ENCODE measurements at regions of chr3 and their contacts with region 1.

Region 1: DNA sequence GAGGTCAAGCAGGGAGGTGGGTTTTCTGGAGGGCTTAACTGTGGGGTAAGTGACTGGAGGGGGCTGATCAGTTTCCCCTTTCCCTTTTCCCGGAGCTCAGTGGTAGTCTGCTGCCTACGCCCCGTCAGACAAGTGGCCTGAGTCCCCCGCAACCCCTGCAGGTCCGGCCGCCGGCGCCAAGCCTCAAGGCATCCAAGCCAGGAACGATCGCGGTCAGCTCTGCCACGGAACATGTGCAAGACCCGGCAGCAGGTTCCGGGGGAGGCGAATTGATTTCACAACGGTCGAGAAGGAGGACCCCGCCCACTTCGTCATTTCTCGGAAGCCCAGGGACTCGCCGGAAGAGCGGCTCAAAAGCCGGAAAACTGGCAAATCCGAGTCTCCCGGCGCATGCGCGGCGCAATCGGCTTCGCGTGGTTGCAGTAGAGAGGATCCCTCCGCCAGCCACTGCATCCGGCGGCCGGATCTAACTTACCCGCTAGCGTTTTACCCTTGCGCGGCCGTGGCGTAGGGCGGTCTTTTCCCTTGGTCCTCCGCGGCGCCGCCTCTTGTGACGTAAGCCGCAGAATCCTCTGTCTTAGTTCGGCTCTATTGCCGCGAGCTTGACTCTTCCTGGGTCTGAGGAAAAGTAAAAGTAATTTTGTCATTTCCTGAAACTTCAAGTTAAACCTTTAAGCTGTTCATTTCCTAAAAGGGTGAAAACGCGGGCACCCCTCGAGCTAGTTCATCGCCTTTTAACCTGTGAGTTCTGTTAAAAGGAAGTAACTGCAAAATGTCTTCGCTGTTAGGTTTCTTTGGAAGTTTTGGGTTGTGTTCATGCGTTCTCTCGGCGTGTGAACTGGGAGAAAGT is 14.9 kb upstream of the CCNL1 start:
- DNase-seq: peak; percentile 99
- H3K4me3 ChIP-seq: peak overlapping the region; percentile 30 to 67 (median 54)
- H3K27ac ChIP-seq: peak overlapping the region; percentile 95 to 98 (median 96)
- H3K4me1 ChIP-seq: peaks cover 10 to 26% (median 18%) of the 10 kb centered on the region in 4 donors
- H3K27me3 ChIP-seq: no peaks in the 10 kb centered on the region
- CTCF ChIP-seq: no peak
- EP300 ChIP-seq: peak; percentile 93
- POLR2A ChIP-seq: peak; percentile 99

Region 2: GRCh38 chr3:157159762-157160657 is 14.9 kb before region 1 on chr3 and contains the start of gene CCNL1:
- in situ Hi-C with region 1: no loop called
- intact Hi-C with region 1: loop called (anchors 1 kb)
- DNase-seq: peak; percentile 98
- H3K4me3 ChIP-seq: peak within 1 kb of the TSS; percentile 79 to 99 (median 90)
- H3K27ac ChIP-seq: peak within 1 kb of the TSS; percentile 98 to 100 (median 100)
- H3K4me1 ChIP-seq: peaks cover 41 to 75% (median 51%) of the 10 kb centered on the region in 4 donors
- H3K27me3 ChIP-seq: no peaks in the 10 kb centered on the region
- CTCF ChIP-seq: peak in 2 of 5 experiments; percentile 24 to 27
- EP300 ChIP-seq: peak; percentile 90
- POLR2A ChIP-seq: peak; percentile 100
- total RNA-seq, gene CCNL1: 288 to 422 (median 308) TPM

Region 3: GRCh38 chr3:157220211-157220610 is 45.3 kb after region 1 on chr3:
- in situ Hi-C with region 1: no loop called
- intact Hi-C with region 1: no loop called
- DNase-seq: no peak
- H3K4me3 ChIP-seq: no peak overlapping the region
- H3K27ac ChIP-seq: no peak overlapping the region
- H3K4me1 ChIP-seq: no peaks in the 10 kb centered on the region
- H3K27me3 ChIP-seq: no peaks in the 10 kb centered on the region
- CTCF ChIP-seq: no peak
- EP300 ChIP-seq: no peak
- POLR2A ChIP-seq: no peak

Measured in transverse colon (tissue), 4 donors.